Activated naive CD4-positive, alpha-beta T cell treated with anti-CD3 and anti-CD28 coated beads for 36 hours (primary cell): ENCODE measurements at regions of chr19 and their contacts with region 1.

Region 1: GRCh38 chr19:10332955-10333757 is at the start of gene RAVER1:
- DNase-seq: peak; percentile 99
- H3K4me3 Mint-ChIP-seq: peak within 1 kb of the TSS; percentile 94
- H3K27ac Mint-ChIP-seq: peak within 1 kb of the TSS; percentile 96
- H3K4me1 Mint-ChIP-seq: peaks cover 36% of the 10 kb centered on the region
- H3K27me3 Mint-ChIP-seq: no peaks in the 10 kb centered on the region
- total RNA-seq, gene RAVER1: 63.0 to 69.0 TPM

Region 2: GRCh38 chr19:10292206-10292788 is 40.9 kb before region 1 on chr19:
- CTCF ChIA-PET with region 1: interaction called, 3 read pairs
- intact Hi-C with region 1: loop called (anchors 5 kb)
- DNase-seq: peak; percentile 80
- H3K4me3 Mint-ChIP-seq: peak overlapping the region; percentile 52
- H3K27ac Mint-ChIP-seq: no peak overlapping the region
- H3K4me1 Mint-ChIP-seq: peaks cover 66% of the 10 kb centered on the region
- H3K27me3 Mint-ChIP-seq: peaks cover 77% of the 10 kb centered on the region

Region 3: DNA sequence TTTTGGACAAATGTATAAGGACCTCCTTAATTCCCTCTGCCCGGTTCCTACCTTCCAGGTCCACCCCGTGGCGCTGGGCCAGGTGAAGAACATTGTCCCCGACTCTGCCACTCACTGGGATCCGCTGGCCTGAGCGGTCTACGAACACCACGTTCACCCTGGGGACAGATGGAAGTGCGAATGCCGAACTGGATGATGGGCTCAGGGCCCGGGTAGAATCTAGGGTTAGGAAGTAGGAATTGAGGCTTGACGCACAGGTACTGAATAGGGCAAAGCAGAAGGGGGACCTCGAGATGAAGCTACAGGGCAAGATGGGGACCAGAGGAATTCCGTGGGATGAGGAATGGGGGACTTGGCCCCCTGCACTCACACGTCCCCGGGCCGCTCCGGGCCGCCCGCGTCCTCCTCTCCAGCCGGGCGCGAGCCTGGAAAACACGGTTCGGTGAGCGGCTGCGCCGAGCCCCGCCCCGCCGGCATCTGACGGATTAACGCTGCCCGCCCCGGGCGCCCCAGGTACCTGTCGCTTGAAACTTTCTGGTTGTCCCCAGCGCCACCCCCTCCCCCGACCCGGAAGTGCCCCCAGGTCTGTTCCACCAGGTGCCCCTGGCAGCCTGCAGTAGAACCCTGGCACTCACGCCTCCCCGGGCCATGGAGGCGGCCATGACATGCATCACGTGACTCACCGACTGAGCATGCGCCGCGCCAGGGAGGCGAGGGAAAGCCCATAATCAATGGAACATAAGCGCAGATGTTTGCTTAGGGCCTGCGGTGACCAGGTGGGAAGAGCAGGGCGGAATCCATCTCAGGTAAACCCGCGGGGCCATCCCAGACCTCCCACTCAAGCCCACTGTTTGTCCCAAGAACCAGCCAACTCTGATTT is 17.6 kb before region 1 on chr19 and contains the start of gene FDX2:
- CTCF ChIA-PET with region 1: interaction called, 4 read pairs
- intact Hi-C with region 1: loop called (anchors 2 kb)
- DNase-seq: peak; percentile 94
- H3K4me3 Mint-ChIP-seq: peak within 1 kb of the TSS; percentile 89
- H3K27ac Mint-ChIP-seq: peak within 1 kb of the TSS; percentile 83
- H3K4me1 Mint-ChIP-seq: peaks cover 18% of the 10 kb centered on the region
- H3K27me3 Mint-ChIP-seq: no peaks in the 10 kb centered on the region
- total RNA-seq, gene FDX2: 9.5 to 9.7 TPM

Region 4: DNA sequence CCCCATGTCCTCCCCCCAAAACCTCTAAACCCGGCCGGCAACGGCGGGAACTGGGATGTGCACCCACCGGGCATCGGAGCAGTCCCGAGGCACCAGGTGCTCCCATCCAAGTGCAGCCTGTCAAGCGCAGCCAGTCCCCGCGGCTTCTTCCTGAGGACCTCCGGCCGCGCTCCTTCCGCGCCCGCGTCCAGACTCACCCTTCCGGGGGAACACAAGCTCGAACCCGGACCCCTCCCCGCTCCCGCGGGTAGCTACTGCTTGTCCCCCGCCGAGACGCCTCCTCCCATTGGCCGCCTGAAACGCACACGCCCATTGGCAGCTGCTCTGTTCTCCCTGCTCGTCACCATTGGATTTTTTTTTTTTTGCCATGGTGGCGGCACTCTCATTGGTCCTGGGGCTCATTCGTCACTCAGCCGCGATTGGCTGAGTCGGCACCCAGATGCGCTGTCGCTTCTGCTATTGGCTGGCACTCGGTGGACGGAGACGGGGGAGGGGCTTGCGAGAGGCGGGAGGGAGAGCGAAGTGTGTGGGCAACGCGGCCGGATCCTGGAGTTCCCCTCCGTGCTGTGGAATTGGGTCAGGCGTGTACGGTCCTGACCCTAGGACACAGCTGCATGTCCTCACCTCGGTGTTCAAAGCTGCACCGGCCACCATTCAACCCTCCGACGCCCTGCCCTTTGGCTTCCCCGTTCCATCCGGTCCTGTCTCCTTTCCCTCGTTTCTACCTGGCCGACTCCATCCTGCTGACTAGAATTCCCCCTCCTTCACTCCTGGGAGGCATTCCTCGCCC is 47.4 kb after region 1 on chr19 and contains the start of gene TYK2:
- CTCF ChIA-PET with region 1: interaction called, 5 read pairs
- intact Hi-C with region 1: loop called (anchors 1 kb)
- DNase-seq: peak; percentile 97
- H3K4me3 Mint-ChIP-seq: peak within 1 kb of the TSS; percentile 87
- H3K27ac Mint-ChIP-seq: peak within 1 kb of the TSS; percentile 91
- H3K4me1 Mint-ChIP-seq: peaks cover 19% of the 10 kb centered on the region
- H3K27me3 Mint-ChIP-seq: no peaks in the 10 kb centered on the region
- total RNA-seq, gene TYK2: 175 to 190 TPM